Sciatic nerve (tissue), 2 donors: ENCODE measurements at regions of chr20 and their contacts with region 1.

Region 1: DNA sequence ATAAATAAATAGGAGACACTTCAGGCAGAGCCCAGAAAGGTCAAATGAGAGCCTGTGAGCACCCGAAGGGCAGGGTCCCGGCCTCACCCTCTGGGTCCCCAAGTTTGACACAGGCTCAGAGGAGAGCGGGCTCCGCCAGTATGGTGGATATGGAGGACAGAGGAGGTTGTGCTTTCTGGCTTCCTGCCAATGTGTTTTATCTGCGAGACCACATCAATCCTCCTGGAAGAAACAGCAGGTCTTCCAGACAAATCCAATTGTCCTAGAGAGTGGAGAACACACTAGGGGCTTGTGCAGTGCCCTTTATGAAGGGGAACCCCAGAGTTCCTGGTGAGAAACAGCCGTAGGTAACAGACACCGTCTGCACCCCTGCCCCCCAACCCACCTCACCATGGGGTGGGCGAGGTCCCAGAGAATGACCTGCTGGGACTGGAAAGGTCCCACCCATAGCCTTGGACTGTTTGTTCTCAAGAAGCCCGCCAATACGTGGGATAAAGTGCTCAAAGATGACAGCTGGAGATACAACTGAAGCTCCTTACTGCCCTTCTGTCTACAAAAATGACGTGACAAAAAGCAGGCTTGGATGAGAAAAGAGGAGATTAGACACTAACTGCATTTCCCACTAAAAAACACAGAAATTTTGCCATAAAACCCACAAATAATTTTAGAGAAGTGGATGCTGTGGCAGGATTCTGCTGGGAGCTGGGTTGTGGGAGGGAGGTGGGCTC is 24.0 kb upstream of the SSTR4 start:
- DNase-seq: no peak
- ATAC-seq: no peak

Region 2: DNA sequence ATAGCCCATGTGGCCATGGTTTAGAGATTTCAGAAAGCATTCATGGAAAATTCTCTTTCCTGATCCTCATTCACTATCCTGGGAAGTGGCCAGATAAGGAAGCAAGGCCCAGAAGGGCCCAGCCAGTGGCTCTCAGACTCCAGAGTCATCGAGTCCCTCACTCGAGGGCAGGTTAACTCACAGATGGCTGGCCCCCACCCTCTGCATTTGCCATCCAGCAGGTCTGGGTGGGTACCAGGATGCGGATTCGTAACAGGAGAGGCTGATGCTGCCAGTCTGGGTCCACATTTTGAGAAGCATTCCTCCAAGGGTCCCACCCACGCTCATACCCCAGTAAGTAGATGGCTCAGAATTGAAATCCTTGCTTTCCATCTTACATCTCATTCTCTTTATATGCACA is 20.2 kb after region 1 on chr20:
- intact Hi-C with region 1: loop called (anchors 1 kb)
- DNase-seq: peak; percentile 45
- ATAC-seq: no peak

Region 3: DNA sequence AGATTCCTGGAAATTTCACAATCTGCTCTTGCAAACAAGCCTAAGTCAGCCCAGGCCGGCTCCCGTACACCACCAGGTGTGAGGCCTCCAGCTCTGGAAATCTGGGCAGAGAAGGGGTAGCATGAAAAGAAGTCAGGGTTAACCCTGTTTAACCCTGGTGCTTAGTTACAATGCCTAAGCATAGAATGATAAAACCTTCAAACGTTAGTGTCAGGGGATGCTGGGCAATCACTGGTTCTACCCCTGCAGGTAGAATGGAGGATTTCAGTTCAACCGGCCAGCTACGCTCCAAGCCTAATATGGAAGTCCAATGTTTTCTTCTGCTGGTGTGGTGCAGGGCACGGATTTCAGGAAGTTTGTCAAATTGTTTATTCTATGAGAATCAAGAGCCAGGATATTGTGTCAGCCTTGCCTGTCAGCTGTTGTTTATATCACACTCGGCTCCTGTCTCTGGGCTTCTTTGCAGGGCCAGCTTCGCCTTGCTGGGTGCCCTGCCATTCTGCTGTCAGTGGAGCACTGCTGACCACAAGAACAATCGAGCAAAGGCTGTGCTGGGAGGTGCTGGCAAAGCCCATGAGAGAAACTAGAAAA is 95.2 kb after region 1 on chr20:
- intact Hi-C with region 1: no loop called
- DNase-seq: no peak
- ATAC-seq: peak; percentile 67